MCF 10A (cell line): ENCODE measurements at regions of chr14 and their contacts with region 1.

Region 1: DNA sequence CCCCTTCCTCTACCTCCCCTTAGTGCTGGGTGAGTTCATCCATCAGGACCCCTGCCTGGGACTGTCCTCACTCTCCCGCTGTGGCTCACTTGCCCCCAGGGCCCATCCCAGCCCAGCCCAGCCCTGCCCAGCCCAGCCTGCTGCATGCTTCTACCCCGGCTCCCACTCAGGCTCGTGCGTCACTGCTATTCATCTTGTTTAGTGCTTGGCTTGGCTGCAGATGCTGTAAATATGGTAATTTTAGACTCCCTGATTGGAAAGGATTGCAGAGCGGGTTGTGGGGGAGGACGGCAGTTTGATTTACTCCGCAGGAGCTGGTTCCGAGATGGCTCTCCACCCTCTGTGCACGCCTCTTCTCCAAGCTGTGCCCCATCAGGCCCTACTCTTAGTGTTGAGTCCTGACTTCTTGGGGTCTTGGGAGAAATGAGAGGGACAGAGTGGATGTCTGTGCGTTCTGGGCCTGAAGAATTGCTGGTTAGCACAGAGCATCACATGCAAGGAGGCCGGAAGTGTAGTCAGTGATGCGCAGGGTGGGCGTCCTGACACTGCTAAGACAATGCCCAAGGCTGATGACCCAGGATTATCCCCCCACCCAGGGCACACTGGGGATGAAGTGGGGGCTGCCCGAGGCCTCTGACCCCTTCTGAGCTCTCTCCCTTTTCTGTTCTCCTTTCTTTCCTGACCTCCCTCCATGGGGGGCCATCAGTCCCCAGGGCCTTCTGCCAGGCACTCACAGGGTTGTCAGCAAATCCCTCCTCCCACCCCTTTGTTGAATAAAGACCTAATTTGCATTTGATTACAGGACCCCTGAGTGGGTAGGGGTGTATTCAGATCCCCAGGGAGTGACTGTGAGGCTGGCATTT is 244.4 kb downstream of the ZFP36L1 start:
- DNase-seq: peak; percentile 98
- H3K4me3 Mint-ChIP-seq: peak overlapping the region; percentile 69
- H3K27ac Mint-ChIP-seq: peak overlapping the region; percentile 98
- H3K4me1 Mint-ChIP-seq: peaks cover 86% of the 10 kb centered on the region
- H3K27me3 Mint-ChIP-seq: no peaks in the 10 kb centered on the region
- CTCF ChIP-seq: no peak

Region 2: GRCh38 chr14:67943947-67944346 is 604.5 kb before region 1 on chr14:
- CTCF ChIA-PET with region 1: interaction called, 8 read pairs
- POLR2A ChIA-PET with region 1: interaction called, 24 read pairs
- intact Hi-C with region 1: loop called (anchors 5 kb)
- DNase-seq: peak; percentile 77
- H3K4me3 Mint-ChIP-seq: no peak overlapping the region
- H3K27ac Mint-ChIP-seq: peak overlapping the region; percentile 81
- H3K4me1 Mint-ChIP-seq: peaks cover 39% of the 10 kb centered on the region
- H3K27me3 Mint-ChIP-seq: no peaks in the 10 kb centered on the region
- CTCF ChIP-seq: peak; percentile 81

Region 3: DNA sequence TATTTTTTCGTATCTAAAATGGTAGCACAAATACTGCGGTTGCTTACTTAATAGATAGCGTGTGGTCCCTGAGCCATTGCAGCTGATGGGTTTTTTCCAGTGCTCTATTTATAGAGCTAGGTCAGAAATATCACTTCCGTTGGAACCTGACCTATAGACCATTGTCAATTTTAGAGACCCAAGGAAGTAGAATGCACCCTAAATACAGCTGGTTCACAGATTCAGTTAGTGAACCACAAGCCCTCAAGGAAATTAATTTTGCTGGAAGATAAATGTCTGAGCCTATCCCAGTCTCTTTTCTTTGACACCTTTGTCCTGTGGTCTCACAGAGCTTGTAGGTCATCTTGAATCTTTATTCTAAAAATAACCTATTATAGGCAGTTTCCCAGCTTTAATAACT is 146.6 kb before region 1 on chr14:
- CTCF ChIA-PET with region 1: interaction called, 3 read pairs
- POLR2A ChIA-PET with region 1: interaction called, 5 read pairs
- intact Hi-C with region 1: loop called (anchors 2 kb)
- DNase-seq: no peak
- H3K4me3 Mint-ChIP-seq: no peak overlapping the region
- H3K27ac Mint-ChIP-seq: peak overlapping the region; percentile 59
- H3K4me1 Mint-ChIP-seq: peaks cover 47% of the 10 kb centered on the region
- H3K27me3 Mint-ChIP-seq: no peaks in the 10 kb centered on the region
- CTCF ChIP-seq: no peak

Region 4: DNA sequence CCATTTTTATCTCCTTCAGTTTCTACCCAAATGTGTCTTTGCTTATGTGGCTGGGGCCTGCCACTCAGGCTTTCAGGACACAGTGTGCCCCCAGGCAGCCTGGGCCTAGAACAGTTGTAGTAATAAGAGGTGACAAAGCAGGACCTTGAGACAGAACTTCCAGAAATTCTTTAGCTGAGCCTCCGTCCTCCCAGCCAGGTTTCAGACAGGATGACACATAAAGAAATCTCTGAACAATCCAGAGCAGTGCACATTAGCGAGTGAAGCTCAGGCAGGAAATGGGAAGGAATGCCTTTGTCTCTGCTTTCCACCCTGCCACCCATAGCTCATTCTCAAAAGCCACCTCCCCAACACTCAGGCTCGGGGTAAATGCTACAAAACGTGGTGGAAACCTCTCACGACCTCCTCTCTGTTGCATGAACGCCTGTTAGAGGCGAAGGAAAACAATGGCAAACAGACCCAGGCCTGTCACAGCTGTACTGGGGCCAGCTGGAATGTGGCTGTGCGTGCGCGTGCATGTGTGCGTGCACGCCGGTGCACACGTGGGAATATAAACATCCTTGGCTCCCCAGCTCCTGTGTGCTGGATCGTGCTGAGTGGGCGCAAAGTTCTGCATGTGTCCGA is 42.3 kb before region 1 on chr14:
- CTCF ChIA-PET with region 1: no interaction called
- POLR2A ChIA-PET with region 1: interaction called, 10 read pairs
- intact Hi-C with region 1: no loop called
- DNase-seq: peak; percentile 46
- H3K4me3 Mint-ChIP-seq: peak overlapping the region; percentile 44
- H3K27ac Mint-ChIP-seq: peak overlapping the region; percentile 88
- H3K4me1 Mint-ChIP-seq: peaks cover 27% of the 10 kb centered on the region
- H3K27me3 Mint-ChIP-seq: no peaks in the 10 kb centered on the region
- CTCF ChIP-seq: no peak

Region 5: DNA sequence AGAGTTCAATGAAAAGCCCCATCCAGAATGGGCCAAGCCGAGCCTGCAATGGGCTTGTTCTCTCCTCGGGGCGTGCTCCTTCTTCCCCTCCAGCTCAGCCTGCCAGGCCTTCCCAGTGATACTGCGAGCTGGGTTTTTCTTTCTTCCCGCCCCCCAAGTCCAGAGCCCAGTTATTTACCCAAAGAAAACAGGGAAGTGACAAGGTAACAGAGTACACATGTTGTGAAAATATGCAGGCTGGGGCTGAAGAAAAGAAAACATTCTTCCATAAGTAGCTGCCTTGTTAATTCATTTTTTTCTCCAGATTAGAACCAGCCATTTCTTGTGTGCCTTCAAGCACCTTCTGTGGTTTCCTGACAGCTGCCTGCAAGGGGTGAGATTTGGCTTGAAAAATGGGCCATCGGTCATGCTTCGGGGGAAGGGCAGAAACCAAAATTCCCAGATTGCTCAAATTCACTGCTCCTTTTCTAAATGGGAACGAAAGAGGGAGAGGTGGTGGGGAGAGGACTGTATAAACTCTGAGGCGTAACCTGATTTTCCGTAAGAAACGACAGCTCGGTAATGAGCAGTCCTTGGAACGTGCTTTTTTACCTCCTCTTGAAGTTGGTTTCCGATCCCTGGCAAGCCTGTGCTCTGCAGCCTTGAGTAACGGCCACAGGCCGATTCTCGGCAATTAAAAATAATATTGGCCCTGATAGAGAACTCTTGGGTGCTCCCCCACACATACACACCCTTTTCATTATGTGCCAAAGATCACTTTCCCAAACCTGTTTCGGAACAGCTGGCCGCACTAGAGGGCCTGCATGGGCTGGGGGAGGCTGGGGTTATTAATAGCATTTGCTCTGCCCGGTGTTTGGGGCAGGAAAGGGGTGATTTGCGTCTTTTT is 15.1 kb after region 1 on chr14:
- CTCF ChIA-PET with region 1: no interaction called
- POLR2A ChIA-PET with region 1: interaction called, 11 read pairs
- intact Hi-C with region 1: no loop called
- DNase-seq: peak; percentile 63
- H3K4me3 Mint-ChIP-seq: peak overlapping the region; percentile 38
- H3K27ac Mint-ChIP-seq: peak overlapping the region; percentile 77
- H3K4me1 Mint-ChIP-seq: peaks cover 42% of the 10 kb centered on the region
- H3K27me3 Mint-ChIP-seq: no peaks in the 10 kb centered on the region
- CTCF ChIP-seq: no peak

Region 6: DNA sequence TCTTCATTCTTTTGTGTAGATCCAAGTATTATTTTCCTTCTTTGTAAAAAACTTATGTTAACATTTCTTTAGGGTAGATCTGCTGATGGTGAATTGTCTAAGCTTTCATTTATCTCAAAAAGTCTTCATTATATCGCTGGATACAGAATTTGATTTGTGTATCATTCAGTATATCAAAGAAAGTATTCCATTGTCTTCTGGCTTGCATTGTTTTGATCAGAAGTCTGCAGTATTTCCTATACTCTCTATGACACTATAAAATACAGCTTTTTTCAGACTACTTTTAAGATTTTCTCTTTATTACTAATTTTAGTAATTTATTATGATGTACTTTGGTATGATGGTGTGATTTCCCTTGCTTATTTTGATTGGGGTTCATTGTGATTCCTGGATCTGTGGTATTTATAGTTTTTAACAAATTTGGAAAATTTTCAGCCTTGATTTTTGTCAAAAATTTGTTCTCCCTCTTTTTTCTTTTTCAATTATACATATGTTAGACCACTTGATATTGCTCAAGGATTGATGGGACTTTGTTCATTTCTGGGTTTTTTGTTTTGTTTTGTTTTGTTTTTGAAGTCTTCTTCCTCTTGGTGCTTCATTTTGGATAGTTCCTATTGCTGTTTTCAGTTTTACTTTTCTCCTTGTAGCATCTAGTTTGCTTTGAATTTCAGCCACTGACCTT is 67.9 kb after region 1 on chr14:
- CTCF ChIA-PET with region 1: no interaction called
- POLR2A ChIA-PET with region 1: no interaction called
- intact Hi-C with region 1: no loop called
- DNase-seq: peak; percentile 48
- H3K4me3 Mint-ChIP-seq: no peak overlapping the region
- H3K27ac Mint-ChIP-seq: no peak overlapping the region
- H3K4me1 Mint-ChIP-seq: no peaks in the 10 kb centered on the region
- H3K27me3 Mint-ChIP-seq: no peaks in the 10 kb centered on the region
- CTCF ChIP-seq: no peak

Region 7: DNA sequence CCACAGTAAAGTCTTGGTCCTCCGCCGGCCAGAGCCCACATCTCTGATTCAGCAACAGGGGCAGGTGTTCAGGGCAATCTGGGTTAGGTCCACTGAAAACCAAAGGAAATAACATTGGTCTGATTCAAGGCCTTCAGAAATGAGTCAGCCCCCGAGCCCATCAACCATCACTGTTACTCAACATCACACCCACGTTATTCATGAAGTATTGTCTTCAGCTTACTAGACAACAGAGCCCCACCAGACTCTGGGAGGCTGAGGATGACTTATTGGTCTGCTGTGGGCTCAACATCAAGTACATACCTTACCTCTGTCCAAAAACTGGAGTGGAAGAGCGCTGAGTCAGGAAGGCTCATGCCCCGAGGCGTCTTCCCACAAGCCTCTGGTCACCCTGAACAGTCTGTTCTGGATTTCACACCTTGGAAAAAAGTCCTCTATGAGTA is 146.9 kb after region 1 on chr14:
- CTCF ChIA-PET with region 1: no interaction called
- POLR2A ChIA-PET with region 1: interaction called, 38 read pairs
- intact Hi-C with region 1: loop called (anchors 1 kb)
- DNase-seq: peak; percentile 99
- H3K4me3 Mint-ChIP-seq: peak overlapping the region; percentile 40
- H3K27ac Mint-ChIP-seq: peak overlapping the region; percentile 96
- H3K4me1 Mint-ChIP-seq: peaks cover 44% of the 10 kb centered on the region
- H3K27me3 Mint-ChIP-seq: no peaks in the 10 kb centered on the region
- CTCF ChIP-seq: no peak

Region 8: DNA sequence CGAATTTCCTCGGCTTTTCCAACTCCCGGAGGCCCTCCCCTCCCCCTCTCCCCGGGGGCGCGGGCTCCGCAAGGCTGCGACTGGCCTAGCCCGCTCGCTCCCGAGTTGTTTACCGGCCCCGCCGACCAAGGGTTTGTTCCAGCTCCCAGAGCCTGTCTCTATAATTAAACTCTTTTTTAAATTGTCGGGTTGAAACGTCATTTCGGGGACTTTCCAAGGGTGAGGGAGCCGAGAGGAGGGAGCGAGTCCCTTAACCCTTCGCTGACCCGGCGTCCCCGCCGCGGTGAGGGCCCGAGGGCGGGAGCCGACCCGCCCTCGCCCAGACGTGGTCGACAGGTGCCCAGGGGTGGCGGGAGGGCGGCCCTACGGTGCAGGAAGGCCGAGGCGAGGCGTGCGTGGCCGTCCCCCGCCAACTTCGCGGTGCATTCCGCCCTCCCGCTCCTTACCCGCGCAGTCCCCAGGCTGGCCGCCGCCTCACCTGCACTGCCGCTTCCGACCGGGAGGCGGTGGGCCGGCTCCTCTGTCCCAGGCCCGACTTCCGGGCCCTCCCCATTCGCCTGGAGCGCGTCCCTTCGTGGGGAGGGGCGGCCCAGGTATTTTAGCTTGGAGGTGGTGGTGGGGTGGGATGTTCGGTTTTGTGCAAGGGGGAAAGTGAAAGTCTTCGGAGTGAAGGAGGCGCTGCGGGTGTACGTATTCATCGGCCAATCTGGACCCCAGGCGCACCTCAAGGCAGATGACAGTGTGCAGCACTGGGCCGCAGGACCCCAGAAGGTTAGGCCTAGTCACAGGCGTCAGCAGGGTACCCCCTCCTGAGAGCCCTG is 247.4 kb after region 1 on chr14:
- CTCF ChIA-PET with region 1: no interaction called
- POLR2A ChIA-PET with region 1: interaction called, 403 read pairs
- intact Hi-C with region 1: no loop called
- DNase-seq: peak; percentile 81
- H3K4me3 Mint-ChIP-seq: peak overlapping the region; percentile 98
- H3K27ac Mint-ChIP-seq: peak overlapping the region; percentile 97
- H3K4me1 Mint-ChIP-seq: peaks cover 15% of the 10 kb centered on the region
- H3K27me3 Mint-ChIP-seq: no peaks in the 10 kb centered on the region
- CTCF ChIP-seq: peak; percentile 72

Region 9: DNA sequence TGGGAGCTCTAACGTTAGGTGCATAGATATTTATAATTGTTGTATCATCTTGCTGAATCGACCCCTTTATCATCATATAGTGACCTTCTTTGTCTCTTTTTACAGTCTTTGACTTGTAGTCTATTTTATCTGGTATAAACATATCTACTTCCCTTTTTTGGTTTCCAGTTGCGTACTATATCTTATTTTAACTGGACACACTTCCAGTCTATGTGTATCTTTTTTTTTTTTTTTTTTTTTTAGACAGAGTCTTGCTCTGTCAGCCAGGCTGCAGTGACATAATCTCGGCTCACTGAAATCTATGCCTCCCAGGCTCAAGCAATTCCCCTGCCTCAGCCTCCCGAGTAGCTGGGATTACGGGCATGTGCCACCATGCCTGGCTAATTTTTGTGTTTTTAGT is 286.4 kb after region 1 on chr14:
- CTCF ChIA-PET with region 1: no interaction called
- POLR2A ChIA-PET with region 1: no interaction called
- intact Hi-C with region 1: no loop called
- DNase-seq: no peak
- H3K4me3 Mint-ChIP-seq: no peak overlapping the region
- H3K27ac Mint-ChIP-seq: no peak overlapping the region
- H3K4me1 Mint-ChIP-seq: no peaks in the 10 kb centered on the region
- H3K27me3 Mint-ChIP-seq: no peaks in the 10 kb centered on the region
- CTCF ChIP-seq: no peak